ENCODE measurements at regions of chr19 and their contacts with region 1.

Region 1: GRCh38 chr19:18557474-18558201 is at the start of gene KXD1:
- DNase-seq: peak; percentile 95 to 100
- ATAC-seq: peak; percentile 98 to 100 (median 98)
- H3K4me3 ChIP-seq: peak within 1 kb of the TSS; percentile 94
- H3K4me3 Mint-ChIP-seq: peak within 1 kb of the TSS; percentile 88
- H3K27ac ChIP-seq: peak within 1 kb of the TSS; percentile 98
- H3K27ac Mint-ChIP-seq: peak within 1 kb of the TSS; percentile 83 to 91
- H3K4me1 ChIP-seq: peaks cover 21% of the 10 kb centered on the region
- H3K4me1 Mint-ChIP-seq: peaks cover 8 to 21% of the 10 kb centered on the region in 2 donors
- H3K27me3 ChIP-seq: no peaks in the 10 kb centered on the region
- H3K27me3 Mint-ChIP-seq: no peaks in the 10 kb centered on the region
- CTCF ChIP-seq: no peak
- total RNA-seq, gene KXD1: 83.2 to 88.8 (median 86.9) TPM

Region 2: GRCh38 chr19:18542936-18543815 is 14.5 kb before region 1 on chr19 and contains the start of gene FKBP8:
- intact Hi-C with region 1: loop called (anchors 1 kb)
- DNase-seq: peak; percentile 94 to 96
- ATAC-seq: peak; percentile 97 to 99 (median 99)
- H3K4me3 ChIP-seq: peak within 1 kb of the TSS; percentile 67
- H3K4me3 Mint-ChIP-seq: peak within 1 kb of the TSS; percentile 91
- H3K27ac ChIP-seq: peak within 1 kb of the TSS; percentile 92
- H3K27ac Mint-ChIP-seq: peak within 1 kb of the TSS; percentile 85 to 95
- H3K4me1 ChIP-seq: peaks cover 22% of the 10 kb centered on the region
- H3K4me1 Mint-ChIP-seq: peaks cover 14 to 21% of the 10 kb centered on the region in 2 donors
- H3K27me3 ChIP-seq: no peaks in the 10 kb centered on the region
- H3K27me3 Mint-ChIP-seq: no peaks in the 10 kb centered on the region
- CTCF ChIP-seq: no peak
- total RNA-seq, gene FKBP8: 149 to 179 (median 162) TPM

Region 3: DNA sequence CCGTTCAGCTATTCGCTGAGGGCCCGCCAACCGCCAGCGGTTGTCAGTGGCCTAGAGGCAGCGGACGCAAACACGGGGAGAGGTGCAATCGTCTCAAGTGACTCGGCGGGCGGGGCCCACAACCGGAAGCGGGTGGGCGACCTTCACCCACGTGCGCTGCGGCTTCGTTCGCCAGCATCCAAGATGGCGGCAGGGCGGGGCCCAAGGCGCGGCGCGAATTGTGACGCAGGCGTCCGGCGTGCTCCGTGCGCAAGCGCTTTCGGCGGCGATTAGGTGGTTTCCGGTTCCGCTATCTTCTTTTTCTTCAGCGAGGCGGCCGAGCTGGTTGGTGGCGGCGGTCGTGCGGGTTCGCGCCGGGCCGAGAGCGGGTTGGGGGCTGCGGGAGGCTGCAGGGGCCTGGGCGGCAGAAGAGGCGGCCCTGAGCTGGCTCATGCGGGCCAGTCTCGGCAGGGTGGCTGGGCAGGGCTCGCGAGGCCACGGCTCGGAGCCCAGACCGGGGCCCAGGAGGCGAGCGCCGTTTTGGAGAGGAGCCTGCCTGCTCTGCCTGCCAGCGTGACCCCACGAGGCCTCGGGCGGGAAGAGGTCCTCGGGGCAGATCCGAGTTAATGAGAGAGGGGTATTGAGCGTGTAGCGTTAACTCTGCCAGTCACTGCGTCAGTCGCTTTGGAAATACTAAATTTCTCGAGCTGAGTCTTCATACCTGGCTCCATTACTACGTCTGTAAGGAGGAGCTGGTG is 14.1 kb after region 1 on chr19 and contains the start of gene UBA52:
- intact Hi-C with region 1: loop called (anchors 1 kb)
- DNase-seq: peak; percentile 99
- ATAC-seq: peak; percentile 88 to 97 (median 91)
- H3K4me3 ChIP-seq: peak within 1 kb of the TSS; percentile 62
- H3K4me3 Mint-ChIP-seq: peak within 1 kb of the TSS; percentile 98
- H3K27ac ChIP-seq: peak within 1 kb of the TSS; percentile 92
- H3K27ac Mint-ChIP-seq: peak within 1 kb of the TSS; percentile 95 to 100
- H3K4me1 ChIP-seq: peaks cover 26% of the 10 kb centered on the region
- H3K4me1 Mint-ChIP-seq: peaks cover 19 to 26% of the 10 kb centered on the region in 2 donors
- H3K27me3 ChIP-seq: no peaks in the 10 kb centered on the region
- H3K27me3 Mint-ChIP-seq: no peaks in the 10 kb centered on the region
- CTCF ChIP-seq: no peak
- total RNA-seq, gene UBA52: 1,016 to 1,271 (median 1,271) TPM

Region 4: GRCh38 chr19:18710996-18711751 is 153.5 kb after region 1 on chr19:
- intact Hi-C with region 1: no loop called
- DNase-seq: no peak
- ATAC-seq: no peak
- H3K4me3 ChIP-seq: no peak overlapping the region
- H3K4me3 Mint-ChIP-seq: no peak overlapping the region
- H3K27ac ChIP-seq: no peak overlapping the region
- H3K27ac Mint-ChIP-seq: no peak overlapping the region
- H3K4me1 ChIP-seq: peaks cover 55% of the 10 kb centered on the region
- H3K4me1 Mint-ChIP-seq: peaks cover 36 to 57% of the 10 kb centered on the region in 2 donors
- H3K27me3 ChIP-seq: no peaks in the 10 kb centered on the region
- H3K27me3 Mint-ChIP-seq: no peaks in the 10 kb centered on the region
- CTCF ChIP-seq: no peak

Region 5: DNA sequence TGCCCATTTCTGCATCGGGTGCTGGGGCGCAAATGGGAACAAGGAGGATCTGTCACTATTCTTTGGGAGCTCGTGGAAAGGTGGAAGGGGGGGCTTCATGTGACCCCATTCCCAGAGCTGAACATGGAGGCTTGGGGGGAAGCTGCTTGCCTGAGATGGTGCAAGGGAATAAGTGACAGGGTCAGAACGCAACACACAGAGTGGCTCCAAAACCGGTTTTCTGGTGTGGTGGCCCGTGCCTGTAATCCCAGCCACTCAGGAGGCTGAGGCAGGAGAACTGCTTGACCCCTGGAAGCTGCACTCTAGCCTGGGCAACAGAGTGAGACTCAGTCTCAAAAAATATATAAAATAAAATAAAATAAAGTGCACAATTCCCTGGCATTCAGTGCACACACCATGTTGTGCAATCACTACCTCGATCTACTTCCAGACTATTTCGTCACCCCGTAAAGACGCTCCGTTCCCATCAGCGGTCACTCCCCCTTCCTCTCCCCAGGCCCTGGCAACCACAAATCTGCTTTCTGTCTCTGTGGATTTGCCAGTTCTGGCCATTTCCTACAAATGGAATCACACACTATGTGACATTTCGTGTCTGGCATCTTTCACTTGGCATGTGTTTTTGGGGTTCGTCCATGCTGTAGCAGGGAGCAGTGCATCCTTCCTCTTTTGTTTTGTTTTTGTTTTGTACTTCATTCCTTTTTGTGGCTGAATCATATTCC is 251.7 kb after region 1 on chr19:
- intact Hi-C with region 1: no loop called
- DNase-seq: no peak
- ATAC-seq: no peak
- H3K4me3 ChIP-seq: no peak overlapping the region
- H3K4me3 Mint-ChIP-seq: no peak overlapping the region
- H3K27ac ChIP-seq: no peak overlapping the region
- H3K27ac Mint-ChIP-seq: no peak overlapping the region
- H3K4me1 ChIP-seq: peaks cover 6% of the 10 kb centered on the region
- H3K4me1 Mint-ChIP-seq: peaks cover 0 to 5% of the 10 kb centered on the region in 2 donors
- H3K27me3 ChIP-seq: no peaks in the 10 kb centered on the region
- H3K27me3 Mint-ChIP-seq: peaks cover 0 to 3% of the 10 kb centered on the region in 2 donors
- CTCF ChIP-seq: no peak